Esophagus muscularis mucosa (tissue), 4 donors: ENCODE measurements at regions of chr16 and their contacts with region 1.

Region 1: DNA sequence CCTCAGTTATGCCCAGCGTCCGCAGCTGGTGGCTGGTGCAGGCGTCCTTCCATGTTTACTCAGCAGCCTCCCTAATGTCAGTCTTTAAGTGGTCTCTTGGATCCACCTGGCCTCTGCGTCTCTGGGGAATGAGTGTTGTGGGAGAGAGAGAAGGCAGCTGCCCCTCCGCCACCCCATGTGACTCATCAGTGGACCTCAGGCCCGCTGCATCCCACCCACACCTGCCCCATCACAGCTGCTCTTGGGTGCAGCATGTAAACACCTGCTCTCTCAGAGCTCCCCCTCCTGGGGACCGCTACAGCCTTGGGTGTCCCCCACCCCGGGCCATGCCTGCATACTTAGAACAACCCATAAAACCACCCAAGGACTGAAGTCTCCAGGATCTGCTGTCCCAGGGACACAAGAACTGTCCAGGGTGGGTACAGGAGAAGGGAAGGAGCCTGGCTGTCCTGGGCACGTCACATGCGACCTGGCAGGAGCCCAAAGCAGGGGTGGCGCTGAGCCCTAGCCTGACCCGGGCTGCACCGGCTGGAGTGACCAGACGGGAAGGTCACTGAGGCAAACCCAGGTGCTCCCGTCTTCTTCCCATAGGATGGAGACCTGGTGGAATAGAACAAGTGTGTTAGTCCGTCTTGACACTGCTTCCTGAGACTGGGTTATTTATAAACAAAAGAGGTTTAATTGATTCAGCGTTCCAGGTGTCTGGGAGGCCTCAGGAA is 4.2 kb downstream of the C16orf90 start:
- DNase-seq: no peak
- H3K4me3 ChIP-seq: no peak overlapping the region
- H3K27ac ChIP-seq: no peak overlapping the region
- H3K4me1 ChIP-seq: peaks cover 0 to 6% (median 5%) of the 10 kb centered on the region in 4 donors
- H3K27me3 ChIP-seq: no peaks in the 10 kb centered on the region
- CTCF ChIP-seq: no peak
- EP300 ChIP-seq: no peak
- POLR2A ChIP-seq: no peak

Region 2: GRCh38 chr16:3264137-3265036 is 226.7 kb before region 1 on chr16:
- intact Hi-C with region 1: loop called (anchors 10 kb)
- DNase-seq: peak; percentile 98
- H3K4me3 ChIP-seq: peak overlapping the region; percentile 85 to 94 (median 88)
- H3K27ac ChIP-seq: peak overlapping the region; percentile 98 to 100 (median 99)
- H3K4me1 ChIP-seq: peaks cover 20 to 34% (median 23%) of the 10 kb centered on the region in 4 donors
- H3K27me3 ChIP-seq: no peaks in the 10 kb centered on the region
- CTCF ChIP-seq: peak in 2 of 3 experiments; percentile 0 to 25
- EP300 ChIP-seq: no peak
- POLR2A ChIP-seq: peak; percentile 88